WTC11 (cell line): ENCODE measurements at regions of chr10 and their contacts with region 1.

Region 1: DNA sequence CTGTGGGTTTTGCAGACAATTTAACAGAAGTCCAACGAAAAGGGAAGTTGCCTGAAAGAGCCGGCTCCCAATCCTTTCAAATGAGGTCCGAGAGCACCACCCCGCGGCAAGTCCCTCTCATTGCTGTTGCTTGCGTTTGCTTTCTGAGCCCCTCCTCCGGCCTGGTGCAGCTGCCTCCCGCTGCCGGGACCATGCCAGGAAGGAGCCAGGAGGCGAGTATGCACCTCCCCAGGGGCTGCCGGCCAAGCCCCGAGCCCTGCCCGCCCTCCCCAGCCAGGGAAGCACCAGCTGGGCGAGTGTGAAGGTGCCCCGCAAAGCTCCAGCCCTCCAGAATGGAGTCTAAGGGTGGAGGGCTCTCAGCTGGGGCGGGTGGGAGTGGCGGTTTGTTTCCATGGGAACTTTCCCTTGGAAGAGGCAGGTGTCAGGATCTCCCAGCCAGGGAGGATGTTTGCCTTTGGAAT is 25.8 kb upstream of the PPP2R2D start:
- DNase-seq: peak; percentile 91
- ATAC-seq: peak; percentile 87
- H3K4me3 Mint-ChIP-seq: peak overlapping the region; percentile 39
- H3K27ac Mint-ChIP-seq: no peak overlapping the region
- H3K4me1 Mint-ChIP-seq: peaks cover 8% of the 10 kb centered on the region
- H3K27me3 Mint-ChIP-seq: peaks cover 2% of the 10 kb centered on the region; the same call in 1 of the 2 replicates
- CTCF ChIP-seq: peak; percentile 73

Region 2: DNA sequence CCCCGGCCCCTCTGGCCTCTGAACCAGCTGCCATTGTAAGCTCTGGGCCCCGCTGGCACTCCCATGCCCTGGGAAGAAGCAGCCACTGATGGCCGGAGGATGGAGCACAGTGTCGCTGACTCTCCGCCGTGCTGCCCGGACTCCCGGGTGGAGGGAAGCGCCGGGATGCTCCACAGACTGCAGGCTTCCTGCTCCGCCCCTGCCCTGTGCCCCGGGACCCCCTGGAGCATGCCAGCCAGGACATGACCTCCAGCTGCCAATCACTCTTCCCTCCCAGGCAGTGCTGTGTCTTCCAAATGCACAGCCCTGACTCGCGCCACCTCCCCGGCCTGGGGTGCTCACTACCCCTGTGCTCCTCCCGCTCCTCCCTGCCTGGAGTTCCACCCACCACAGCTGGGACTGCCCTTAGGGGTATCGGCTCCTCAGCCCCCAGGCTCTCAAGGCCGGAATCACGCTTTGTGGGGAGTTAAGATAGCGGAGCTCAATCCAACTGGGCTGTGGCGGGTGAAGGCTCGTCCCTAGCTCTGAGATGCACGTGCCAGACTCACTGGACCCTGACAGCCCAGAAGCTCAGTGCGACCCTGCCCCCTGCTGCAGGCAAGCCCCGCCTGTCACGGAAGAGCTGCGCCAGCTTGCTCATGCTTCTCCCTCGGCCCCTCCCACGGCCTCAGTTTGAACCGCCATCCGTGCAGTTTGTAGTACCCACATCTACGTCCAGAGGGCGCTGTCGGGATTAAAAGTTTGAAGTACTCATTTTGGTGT is 421.2 kb before region 1 on chr10:
- CTCF ChIA-PET with region 1: interaction called, 10 read pairs
- POLR2A ChIA-PET with region 1: no interaction called
- DNase-seq: peak; percentile 81
- ATAC-seq: peak; percentile 85
- H3K4me3 Mint-ChIP-seq: peak overlapping the region; percentile 48
- H3K27ac Mint-ChIP-seq: no peak overlapping the region
- H3K4me1 Mint-ChIP-seq: 0 out of 2 replicates have a peak, but pooled peaks cover 10% of the 10 kb centered on the region
- H3K27me3 Mint-ChIP-seq: peaks cover 6% of the 10 kb centered on the region
- CTCF ChIP-seq: peak; percentile 86

Region 3: DNA sequence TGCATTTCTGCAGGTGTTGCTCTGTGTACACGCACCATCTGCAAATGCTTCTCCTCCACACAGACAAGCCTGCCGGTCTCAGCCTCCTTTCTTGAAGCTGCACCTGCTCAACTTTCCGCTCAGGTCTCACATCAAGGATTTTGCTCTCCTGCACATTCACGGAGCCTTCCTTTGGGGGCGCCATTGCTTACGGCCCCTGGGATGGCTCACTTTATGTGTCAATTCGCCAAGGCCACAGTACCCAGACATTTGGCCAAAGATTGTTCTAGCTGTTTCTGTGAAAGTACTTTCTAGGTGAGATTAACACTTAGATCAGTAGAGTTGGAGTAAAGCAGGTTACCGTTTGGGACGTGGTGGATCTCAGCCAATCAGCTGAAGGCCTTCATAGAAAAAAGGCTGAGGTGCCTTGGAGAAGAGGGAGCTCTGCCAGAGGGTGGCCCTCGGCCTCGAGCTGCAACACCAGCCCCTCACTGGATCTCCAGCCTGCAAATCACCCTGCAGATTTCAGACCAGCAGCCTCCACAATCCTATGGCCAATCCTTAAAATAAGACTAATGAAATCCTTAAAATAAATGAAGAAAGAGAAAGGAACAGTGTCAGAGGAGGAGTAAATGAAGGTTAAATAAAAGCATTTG is 14.1 kb before region 1 on chr10:
- CTCF ChIA-PET with region 1: interaction called, 12 read pairs
- POLR2A ChIA-PET with region 1: no interaction called
- DNase-seq: peak; percentile 43
- ATAC-seq: peak; percentile 63
- H3K4me3 Mint-ChIP-seq: no peak overlapping the region
- H3K27ac Mint-ChIP-seq: no peak overlapping the region
- H3K4me1 Mint-ChIP-seq: no peaks in the 10 kb centered on the region
- H3K27me3 Mint-ChIP-seq: no peaks in the 10 kb centered on the region; the same call in none of the 2 replicates
- CTCF ChIP-seq: no peak; the same call in 1 of the 2 replicates

Region 4: GRCh38 chr10:131885391-131886161 is 10.6 kb after region 1 on chr10:
- CTCF ChIA-PET with region 1: interaction called, 13 read pairs
- POLR2A ChIA-PET with region 1: no interaction called
- DNase-seq: peak; percentile 88
- ATAC-seq: peak; percentile 99
- H3K4me3 Mint-ChIP-seq: no peak overlapping the region
- H3K27ac Mint-ChIP-seq: no peak overlapping the region
- H3K4me1 Mint-ChIP-seq: peaks cover 7% of the 10 kb centered on the region
- H3K27me3 Mint-ChIP-seq: no peaks in the 10 kb centered on the region
- CTCF ChIP-seq: peak; percentile 78